Right ventricle myocardium inferior (tissue), 1 donor: ENCODE measurements at regions of chr3 and their contacts with region 1.

Region 1: GRCh38 chr3:71583566-71584449 is at the start of gene FOXP1:
- DNase-seq: peak; percentile 91
- ATAC-seq: peak; percentile 73
- total RNA-seq, gene FOXP1: 38.5 TPM

Region 2: GRCh38 chr3:70550723-70551319 is 1033.0 kb before region 1 on chr3:
- intact Hi-C with region 1: loop called (anchors 2 kb)
- DNase-seq: peak; percentile 69
- ATAC-seq: peak; percentile 67

Region 3: DNA sequence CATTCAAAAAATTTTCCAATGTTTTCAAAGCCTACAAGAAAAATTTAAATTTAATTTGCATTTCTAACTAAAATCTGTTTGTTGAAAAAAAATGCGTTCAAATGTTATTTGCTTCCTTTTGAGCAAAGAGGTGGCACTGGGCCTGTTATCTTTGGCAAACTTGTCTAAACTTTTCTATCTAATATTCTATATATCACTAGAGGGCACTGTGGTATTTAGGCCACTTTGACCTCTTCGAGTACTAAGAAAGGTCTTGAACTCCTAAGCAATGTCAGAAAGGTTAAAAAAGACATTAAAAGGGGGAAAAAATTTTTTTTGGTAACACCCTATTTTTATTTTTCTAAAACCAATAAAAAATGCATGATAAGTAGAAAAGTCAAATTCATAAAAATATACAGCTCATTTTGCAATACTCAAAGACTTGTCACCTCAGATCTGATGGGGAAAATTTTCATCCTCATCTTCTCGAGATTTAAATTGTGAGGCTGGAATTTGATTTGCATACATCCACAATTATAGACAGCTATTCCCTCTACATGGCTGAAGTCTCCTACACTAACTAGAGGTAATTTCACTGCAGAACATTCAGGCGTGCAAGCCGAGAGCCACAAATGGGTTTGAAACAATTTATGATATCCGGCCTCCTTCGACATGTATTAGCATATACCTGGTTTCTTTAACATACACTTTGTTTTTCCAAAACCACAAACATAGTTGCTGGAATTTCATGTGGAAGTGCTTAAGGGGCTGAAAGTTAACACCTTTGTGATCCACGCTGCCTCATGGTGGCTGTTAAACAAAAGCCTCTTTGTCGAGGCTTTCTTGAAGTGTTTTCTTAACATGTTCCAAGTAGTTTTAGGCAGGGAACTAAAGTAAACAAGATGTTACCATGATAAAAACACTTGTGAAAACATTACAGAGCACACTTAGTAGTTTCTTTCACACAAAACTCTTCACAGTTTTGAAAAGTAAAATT is 576.7 kb before region 1 on chr3:
- intact Hi-C with region 1: loop called (anchors 5 kb)
- DNase-seq: no peak
- ATAC-seq: peak; percentile 58

Region 4: GRCh38 chr3:71130471-71131374 is 453.1 kb before region 1 on chr3:
- intact Hi-C with region 1: loop called (anchors 2 kb)
- DNase-seq: peak; percentile 77
- ATAC-seq: peak; percentile 76

Region 5: GRCh38 chr3:71305231-71306206 is 278.3 kb before region 1 on chr3:
- intact Hi-C with region 1: loop called (anchors 2 kb)
- DNase-seq: no peak
- ATAC-seq: peak; percentile 86

Region 6: GRCh38 chr3:71430941-71431552 is 152.8 kb before region 1 on chr3:
- intact Hi-C with region 1: loop called (anchors 5 kb)
- DNase-seq: no peak
- ATAC-seq: no peak

Region 7: GRCh38 chr3:72041511-72041910 is 457.7 kb after region 1 on chr3:
- intact Hi-C with region 1: no loop called
- DNase-seq: no peak
- ATAC-seq: peak; percentile 39